CD14-positive monocyte (primary cell): ENCODE measurements at regions of chr4 and their contacts with region 1.

Region 1: GRCh38 chr4:140359562-140360427 is 13.7 kb upstream of the SCOC start:
- DNase-seq: peak; percentile 59 to 79 (median 74)
- H3K4me3 ChIP-seq: no peak overlapping the region
- H3K4me3 Mint-ChIP-seq: no peak overlapping the region
- H3K27ac ChIP-seq: no peak overlapping the region
- H3K27ac Mint-ChIP-seq: peak overlapping the region in 1 of 7 donors; percentile 18
- H3K4me1 ChIP-seq: no peaks in the 10 kb centered on the region
- H3K4me1 Mint-ChIP-seq: no peaks in the 10 kb centered on the region
- H3K27me3 ChIP-seq: no peaks in the 10 kb centered on the region
- H3K27me3 Mint-ChIP-seq: peaks cover 0 to 2% (median 0%) of the 10 kb centered on the region in 3 donors
- CTCF ChIP-seq: peak; percentile 95

Region 2: GRCh38 chr4:139734875-139735380 is 624.9 kb before region 1 on chr4:
- intact Hi-C with region 1: loop called in 1 of 2 experiments (anchors 10 kb)
- DNase-seq: peak; percentile 74 to 97 (median 78)
- H3K4me3 ChIP-seq: peak overlapping the region; percentile 53 to 81 (median 73)
- H3K4me3 Mint-ChIP-seq: peak overlapping the region; percentile 85 to 92
- H3K27ac ChIP-seq: peak overlapping the region; percentile 34 to 79
- H3K27ac Mint-ChIP-seq: peak overlapping the region; percentile 48 to 94 (median 90)
- H3K4me1 ChIP-seq: peaks cover 40 to 57% of the 10 kb centered on the region in 2 donors
- H3K4me1 Mint-ChIP-seq: peaks cover 51% of the 10 kb centered on the region
- H3K27me3 ChIP-seq: no peaks in the 10 kb centered on the region
- H3K27me3 Mint-ChIP-seq: peaks cover 0 to 1% (median 1%) of the 10 kb centered on the region in 3 donors
- CTCF ChIP-seq: peak; percentile 95

Region 3: DNA sequence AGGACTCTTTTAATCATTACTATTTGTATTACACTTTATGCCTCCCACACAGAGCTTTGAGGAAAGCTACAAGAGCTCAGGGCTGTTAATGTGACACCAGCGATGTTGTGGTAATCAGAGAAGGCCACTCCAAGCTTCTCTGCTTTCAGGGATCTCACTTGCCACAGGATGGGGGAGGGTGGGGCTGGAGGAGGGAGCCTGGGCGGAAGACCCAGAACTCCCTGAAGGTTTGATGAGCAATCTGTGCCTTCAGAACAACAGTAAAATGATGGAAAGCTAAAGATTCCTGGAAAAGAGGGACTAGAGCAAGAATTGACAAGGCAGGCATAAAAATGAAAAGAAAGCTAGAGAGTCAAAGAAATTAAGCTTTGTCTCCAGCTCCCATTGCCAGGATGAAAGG is 281.4 kb before region 1 on chr4:
- intact Hi-C with region 1: no loop called
- DNase-seq: no peak
- H3K4me3 ChIP-seq: no peak overlapping the region
- H3K4me3 Mint-ChIP-seq: no peak overlapping the region
- H3K27ac ChIP-seq: no peak overlapping the region
- H3K27ac Mint-ChIP-seq: peak overlapping the region in 1 of 7 donors; percentile 64
- H3K4me1 ChIP-seq: no peaks in the 10 kb centered on the region
- H3K4me1 Mint-ChIP-seq: peaks cover 31% of the 10 kb centered on the region
- H3K27me3 ChIP-seq: no peaks in the 10 kb centered on the region
- H3K27me3 Mint-ChIP-seq: peaks cover 0 to 2% (median 1%) of the 10 kb centered on the region in 3 donors
- CTCF ChIP-seq: no peak

Region 4: DNA sequence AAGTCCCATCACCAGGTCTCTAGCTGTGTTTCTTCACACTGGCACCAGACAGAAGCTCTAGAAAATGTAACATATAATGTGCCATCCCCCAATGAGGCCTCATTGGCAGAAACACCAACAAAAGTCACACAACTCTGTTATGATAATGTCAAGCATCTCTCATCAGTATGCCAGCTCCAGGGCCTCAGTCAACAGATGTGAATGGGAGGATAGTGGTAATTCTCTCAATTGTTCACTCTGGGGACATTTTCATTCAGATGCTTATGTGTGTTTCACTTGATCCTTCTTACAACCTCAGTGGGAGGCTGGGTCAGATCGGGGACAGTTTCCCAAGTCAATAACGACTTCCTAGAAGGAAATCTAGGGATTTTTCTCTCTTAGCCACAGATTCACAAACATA is 43.8 kb before region 1 on chr4:
- intact Hi-C with region 1: no loop called
- DNase-seq: no peak
- H3K4me3 ChIP-seq: no peak overlapping the region
- H3K4me3 Mint-ChIP-seq: no peak overlapping the region
- H3K27ac ChIP-seq: no peak overlapping the region
- H3K27ac Mint-ChIP-seq: no peak overlapping the region
- H3K4me1 ChIP-seq: no peaks in the 10 kb centered on the region
- H3K4me1 Mint-ChIP-seq: no peaks in the 10 kb centered on the region
- H3K27me3 ChIP-seq: no peaks in the 10 kb centered on the region
- H3K27me3 Mint-ChIP-seq: peaks cover 0 to 1% (median 0%) of the 10 kb centered on the region in 3 donors
- CTCF ChIP-seq: no peak

Region 5: GRCh38 chr4:140851032-140851636 is 491.3 kb after region 1 on chr4:
- intact Hi-C with region 1: loop called in 1 of 2 experiments (anchors 10 kb)
- DNase-seq: peak; percentile 64 to 69 (median 66)
- H3K4me3 ChIP-seq: no peak overlapping the region
- H3K4me3 Mint-ChIP-seq: no peak overlapping the region
- H3K27ac ChIP-seq: no peak overlapping the region
- H3K27ac Mint-ChIP-seq: peak overlapping the region in 2 of 7 donors; percentile 0 to 1
- H3K4me1 ChIP-seq: peaks cover 4 to 5% of the 10 kb centered on the region in 2 donors
- H3K4me1 Mint-ChIP-seq: peaks cover 7% of the 10 kb centered on the region
- H3K27me3 ChIP-seq: peaks cover 0 to 2% of the 10 kb centered on the region in 2 donors
- H3K27me3 Mint-ChIP-seq: peaks cover 5 to 10% (median 10%) of the 10 kb centered on the region in 3 donors
- CTCF ChIP-seq: peak; percentile 93

Region 6: GRCh38 chr4:140884431-140885058 is 524.8 kb after region 1 on chr4:
- intact Hi-C with region 1: loop called in 1 of 2 experiments (anchors 10 kb)
- DNase-seq: peak; percentile 42 to 54 (median 54)
- H3K4me3 ChIP-seq: no peak overlapping the region
- H3K4me3 Mint-ChIP-seq: no peak overlapping the region
- H3K27ac ChIP-seq: no peak overlapping the region
- H3K27ac Mint-ChIP-seq: no peak overlapping the region
- H3K4me1 ChIP-seq: no peaks in the 10 kb centered on the region
- H3K4me1 Mint-ChIP-seq: peaks cover 2% of the 10 kb centered on the region
- H3K27me3 ChIP-seq: no peaks in the 10 kb centered on the region
- H3K27me3 Mint-ChIP-seq: peaks cover 0 to 3% (median 1%) of the 10 kb centered on the region in 3 donors
- CTCF ChIP-seq: peak; percentile 72